ENCODE measurements at regions of chr20 and their contacts with region 1.

Region 1: DNA sequence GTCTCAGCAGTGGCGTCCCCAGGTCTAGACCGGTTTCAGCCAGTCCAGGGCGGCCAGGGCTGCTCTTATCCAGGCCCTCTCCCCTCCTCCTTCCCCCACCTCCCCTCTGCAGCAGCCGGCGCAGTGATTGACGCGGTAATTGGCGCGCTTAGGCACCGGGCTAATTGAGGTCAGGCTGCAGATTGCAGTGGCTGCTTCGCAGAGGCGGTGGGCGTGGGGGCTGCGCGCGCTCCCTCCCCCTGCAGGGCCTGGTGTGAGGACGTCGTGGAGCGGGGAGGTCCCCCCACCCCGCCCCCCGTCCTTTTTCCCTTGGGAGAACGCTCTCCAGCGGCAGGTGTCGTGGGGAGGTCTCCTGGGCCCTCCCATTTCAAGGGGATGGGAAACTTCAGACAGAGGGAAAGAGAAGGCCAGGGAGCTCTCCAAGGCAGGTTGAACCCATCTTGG is 70.4 kb upstream of the BLCAP start:
- DNase-seq: peak; percentile 77
- ATAC-seq: peak; percentile 85
- H3K4me3 Mint-ChIP-seq: peak overlapping the region; percentile 31
- H3K27ac Mint-ChIP-seq: no peak overlapping the region
- H3K4me1 Mint-ChIP-seq: peaks cover 15% of the 10 kb centered on the region
- H3K27me3 Mint-ChIP-seq: no peaks in the 10 kb centered on the region; the same call in 1 of the 2 replicates
- CTCF ChIP-seq: no peak

Region 2: GRCh38 chr20:37457921-37458320 is 140.2 kb before region 1 on chr20:
- CTCF ChIA-PET with region 1: no interaction called
- POLR2A ChIA-PET with region 1: no interaction called
- DNase-seq: no peak
- ATAC-seq: no peak
- H3K4me3 Mint-ChIP-seq: no peak overlapping the region
- H3K27ac Mint-ChIP-seq: no peak overlapping the region
- H3K4me1 Mint-ChIP-seq: no peaks in the 10 kb centered on the region
- H3K27me3 Mint-ChIP-seq: peaks cover 17% of the 10 kb centered on the region
- CTCF ChIP-seq: no peak

Region 3: GRCh38 chr20:37615340-37616109 is 17.4 kb after region 1 on chr20:
- CTCF ChIA-PET with region 1: interaction called, 11 read pairs
- POLR2A ChIA-PET with region 1: no interaction called
- DNase-seq: peak; percentile 85
- ATAC-seq: peak; percentile 91
- H3K4me3 Mint-ChIP-seq: no peak overlapping the region
- H3K27ac Mint-ChIP-seq: no peak overlapping the region
- H3K4me1 Mint-ChIP-seq: no peaks in the 10 kb centered on the region
- H3K27me3 Mint-ChIP-seq: peaks cover 9% of the 10 kb centered on the region
- CTCF ChIP-seq: peak; percentile 90